ENCODE measurements at regions of chr7 and their contacts with region 1.

Region 1: DNA sequence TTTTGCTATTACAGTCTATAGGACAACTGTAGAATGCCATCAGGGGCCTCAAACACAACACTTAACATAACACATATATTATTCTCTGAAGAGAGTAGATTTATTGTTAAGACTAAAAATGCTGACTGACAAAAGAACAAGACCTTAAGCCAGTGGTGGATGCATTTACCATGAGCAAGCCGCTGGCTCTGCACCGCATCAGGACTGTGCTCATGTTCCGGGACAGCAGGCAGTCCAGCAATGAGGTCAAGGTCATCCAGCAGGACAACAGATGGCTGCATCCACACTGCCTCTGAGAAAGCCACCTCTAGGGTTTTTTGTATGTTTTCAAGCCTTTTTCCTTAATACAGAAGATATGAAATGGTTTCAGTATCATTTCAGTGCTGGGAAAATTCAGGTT is 23.8 kb downstream of the PEX1 start:
- DNase-seq: peak; percentile 49
- ATAC-seq: peak; percentile 100
- H3K4me3 ChIP-seq: no peak overlapping the region
- H3K27ac ChIP-seq: no peak overlapping the region
- H3K4me1 ChIP-seq: peaks cover 9% of the 10 kb centered on the region
- H3K27me3 ChIP-seq: no peaks in the 10 kb centered on the region
- CTCF ChIP-seq: no peak
- EP300 ChIP-seq: no peak
- POLR2A ChIP-seq: no peak
- RAD21 ChIP-seq: no peak

Region 2: DNA sequence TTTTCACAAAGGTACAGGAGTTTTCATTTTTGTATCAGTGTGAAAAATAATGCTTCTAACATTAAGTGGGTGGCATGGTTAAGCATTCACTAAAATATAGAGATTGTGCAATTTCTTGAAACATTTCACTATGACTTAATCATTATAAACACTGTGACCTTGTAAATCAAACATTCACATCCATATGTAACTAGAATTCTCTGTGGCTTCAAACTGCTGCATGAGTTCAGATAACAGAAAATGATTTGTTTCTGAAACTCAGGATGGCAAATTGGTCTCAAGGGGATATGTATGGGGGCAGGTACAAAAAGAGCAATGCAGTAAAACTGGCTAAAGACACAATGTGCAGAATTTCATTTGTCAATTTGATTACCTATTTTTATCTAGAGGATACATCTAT is 81.8 kb after region 1 on chr7:
- CTCF ChIA-PET with region 1: no interaction called
- POLR2A ChIA-PET with region 1: no interaction called
- in situ Hi-C with region 1: no loop called
- intact Hi-C with region 1: loop called (anchors 1 kb)
- DNase-seq: peak; percentile 49
- ATAC-seq: no peak
- H3K4me3 ChIP-seq: peak overlapping the region in 1 of 3 experiments; percentile 18; a peak in 2 of 6 replicates
- H3K27ac ChIP-seq: peak overlapping the region; percentile 44
- H3K4me1 ChIP-seq: peaks cover 53% of the 10 kb centered on the region
- H3K27me3 ChIP-seq: peaks cover under 1 to 7% of the 10 kb centered on the region in 2 experiments; a peak in 2 of 5 replicates
- CTCF ChIP-seq: no peak
- EP300 ChIP-seq: no peak
- POLR2A ChIP-seq: no peak
- RAD21 ChIP-seq: no peak